ENCODE measurements at regions of chr9 and their contacts with region 1.

Region 1: DNA sequence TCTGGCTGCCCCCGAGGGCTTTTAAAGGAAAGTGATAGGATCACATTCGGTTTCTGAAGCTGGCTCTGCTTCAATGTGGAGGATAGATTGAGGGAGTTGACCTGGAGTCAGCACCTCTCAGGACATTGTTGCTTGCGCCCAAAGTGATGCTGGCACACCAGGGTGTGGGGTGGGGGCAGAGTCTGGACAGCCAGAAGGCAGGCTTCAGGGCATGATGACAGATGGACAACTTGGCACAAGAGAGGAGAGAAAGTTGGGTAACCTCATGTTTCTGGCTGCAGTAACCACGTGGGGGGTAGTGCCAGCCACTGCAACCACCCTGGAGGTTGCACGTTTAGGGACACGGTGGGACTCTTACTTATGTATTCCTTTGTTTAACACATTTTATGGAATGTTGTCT is 9.5 kb downstream of the ALDH1B1 start:
- DNase-seq: no peak
- H3K4me3 ChIP-seq: no peak overlapping the region
- H3K27ac ChIP-seq: no peak overlapping the region
- H3K4me1 ChIP-seq: peaks cover 3% of the 10 kb centered on the region
- H3K27me3 ChIP-seq: no peaks in the 10 kb centered on the region
- CTCF ChIP-seq: no peak

Region 2: DNA sequence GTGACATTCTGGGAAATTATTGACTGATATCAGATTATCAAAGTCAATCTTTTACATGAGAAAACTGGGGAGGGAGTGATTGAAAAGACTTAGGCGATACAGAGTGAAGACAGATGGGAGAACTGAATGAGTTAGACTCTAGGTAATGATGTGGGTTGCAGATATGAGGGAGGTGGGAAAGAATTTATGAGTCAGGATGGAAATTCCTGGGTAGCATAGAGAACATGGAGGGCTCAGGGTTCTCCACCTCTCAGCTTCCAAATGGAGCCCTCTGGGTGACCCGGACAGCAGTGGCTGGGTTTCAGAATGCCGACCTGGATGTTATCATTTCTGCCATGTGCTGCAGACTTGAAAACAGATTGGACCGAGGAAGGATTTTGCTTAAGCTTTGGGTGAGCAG is 257.6 kb before region 1 on chr9:
- intact Hi-C with region 1: no loop called
- DNase-seq: no peak
- H3K4me3 ChIP-seq: no peak overlapping the region
- H3K27ac ChIP-seq: no peak overlapping the region
- H3K4me1 ChIP-seq: no peaks in the 10 kb centered on the region
- H3K27me3 ChIP-seq: no peaks in the 10 kb centered on the region
- CTCF ChIP-seq: no peak

Region 3: GRCh38 chr9:38361473-38361850 is 40.5 kb before region 1 on chr9:
- intact Hi-C with region 1: no loop called
- DNase-seq: no peak
- H3K4me3 ChIP-seq: no peak overlapping the region
- H3K27ac ChIP-seq: no peak overlapping the region
- H3K4me1 ChIP-seq: no peaks in the 10 kb centered on the region
- H3K27me3 ChIP-seq: no peaks in the 10 kb centered on the region
- CTCF ChIP-seq: no peak

Region 4: GRCh38 chr9:38372762-38373619 is 29.0 kb before region 1 on chr9:
- intact Hi-C with region 1: loop called (anchors 2 kb)
- DNase-seq: no peak
- H3K4me3 ChIP-seq: no peak overlapping the region
- H3K27ac ChIP-seq: no peak overlapping the region
- H3K4me1 ChIP-seq: no peaks in the 10 kb centered on the region
- H3K27me3 ChIP-seq: no peaks in the 10 kb centered on the region
- CTCF ChIP-seq: no peak

Region 5: DNA sequence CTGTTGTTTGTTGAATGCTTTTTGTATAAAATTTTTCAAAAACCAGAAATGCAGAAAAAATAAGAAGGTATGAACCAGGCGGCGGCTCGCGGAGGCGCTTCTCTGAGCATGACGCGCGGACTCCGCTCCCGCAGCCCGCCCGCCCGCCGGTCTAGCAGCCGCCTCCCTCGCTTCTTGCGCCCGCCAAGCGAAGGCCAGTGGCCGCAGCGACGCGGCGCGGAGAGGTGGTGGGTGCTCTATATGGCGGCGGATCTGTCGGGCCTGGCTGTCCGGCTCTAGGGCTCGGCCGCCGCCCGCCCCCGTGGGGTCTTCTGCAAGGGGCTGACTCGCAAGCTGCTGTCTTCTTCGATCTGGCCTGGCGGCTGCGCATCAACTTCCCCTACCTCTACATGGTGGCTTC is 124.6 kb after region 1 on chr9:
- intact Hi-C with region 1: no loop called
- DNase-seq: no peak
- H3K4me3 ChIP-seq: no peak overlapping the region
- H3K27ac ChIP-seq: no peak overlapping the region
- H3K4me1 ChIP-seq: no peaks in the 10 kb centered on the region
- H3K27me3 ChIP-seq: no peaks in the 10 kb centered on the region
- CTCF ChIP-seq: no peak